CD4-positive, alpha-beta T cell (primary cell): ENCODE measurements at regions of chr10 and their contacts with region 1.

Region 1: GRCh38 chr10:110724116-110724921 is 80.2 kb downstream of the RBM20 start:
- DNase-seq: peak in 2 of 14 experiments; percentile 29 to 38
- ATAC-seq: peak; percentile 71
- H3K4me3 ChIP-seq: peak overlapping the region; percentile 11
- H3K4me3 Mint-ChIP-seq: peak overlapping the region; percentile 73
- H3K27ac ChIP-seq: peak overlapping the region; percentile 23 to 79
- H3K27ac Mint-ChIP-seq: peak overlapping the region; percentile 79
- H3K4me1 ChIP-seq: peaks cover 32% of the 10 kb centered on the region
- H3K4me1 Mint-ChIP-seq: peaks cover 53% of the 10 kb centered on the region
- H3K27me3 ChIP-seq: no peaks in the 10 kb centered on the region
- H3K27me3 Mint-ChIP-seq: no peaks in the 10 kb centered on the region
- CTCF ChIP-seq: no peak

Region 2: GRCh38 chr10:110395725-110396651 is 328.3 kb before region 1 on chr10:
- CTCF ChIA-PET with region 1: no interaction called
- POLR2A ChIA-PET with region 1: no interaction called
- intact Hi-C with region 1: no loop called
- DNase-seq: peak in 3 of 14 experiments; percentile 29 to 70 (median 63)
- ATAC-seq: peak; percentile 44
- H3K4me3 ChIP-seq: no peak overlapping the region
- H3K4me3 Mint-ChIP-seq: no peak overlapping the region
- H3K27ac ChIP-seq: no peak overlapping the region
- H3K27ac Mint-ChIP-seq: no peak overlapping the region
- H3K4me1 ChIP-seq: peaks cover 10% of the 10 kb centered on the region
- H3K4me1 Mint-ChIP-seq: no peaks in the 10 kb centered on the region
- H3K27me3 ChIP-seq: no peaks in the 10 kb centered on the region
- H3K27me3 Mint-ChIP-seq: no peaks in the 10 kb centered on the region
- CTCF ChIP-seq: no peak

Region 3: DNA sequence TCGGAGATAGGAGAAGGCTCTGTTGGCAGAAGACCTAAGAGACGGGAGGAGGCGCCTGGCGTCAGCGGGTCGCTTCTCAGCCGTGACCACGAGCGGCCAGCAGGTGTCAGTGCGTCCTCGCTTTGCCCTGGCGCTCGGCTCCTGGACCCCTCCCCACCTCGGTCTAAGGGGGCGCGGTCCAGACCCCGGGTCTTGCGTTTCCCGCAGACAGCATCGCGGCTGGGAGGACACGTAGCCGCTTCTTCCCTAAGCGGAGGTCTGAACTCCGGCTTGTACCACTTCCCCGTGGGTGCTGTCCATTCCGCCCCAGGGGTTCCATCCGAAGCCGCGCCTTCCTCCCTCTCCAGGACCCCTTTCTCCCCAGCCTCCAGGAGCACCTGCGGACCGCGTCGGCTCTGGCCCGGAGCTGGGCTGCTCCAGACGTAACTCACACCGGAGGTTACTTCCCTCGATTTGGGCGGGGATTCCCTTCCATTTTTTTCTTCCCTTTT is 351.9 kb after region 1 on chr10:
- CTCF ChIA-PET with region 1: no interaction called
- POLR2A ChIA-PET with region 1: no interaction called
- intact Hi-C with region 1: loop called in 1 of 2 experiments (anchors 10 kb)
- DNase-seq: peak in 12 of 14 experiments; percentile 21 to 60 (median 36)
- ATAC-seq: peak; percentile 65
- H3K4me3 ChIP-seq: peak overlapping the region; percentile 47
- H3K4me3 Mint-ChIP-seq: peak overlapping the region; percentile 51
- H3K27ac ChIP-seq: no peak overlapping the region
- H3K27ac Mint-ChIP-seq: no peak overlapping the region
- H3K4me1 ChIP-seq: peaks cover 28% of the 10 kb centered on the region
- H3K4me1 Mint-ChIP-seq: peaks cover 24% of the 10 kb centered on the region
- H3K27me3 ChIP-seq: peaks cover 48 to 58% of the 10 kb centered on the region in 2 experiments
- H3K27me3 Mint-ChIP-seq: peaks cover 80% of the 10 kb centered on the region
- CTCF ChIP-seq: peak; percentile 45

Region 4: GRCh38 chr10:111316722-111317212 is 592.4 kb after region 1 on chr10:
- CTCF ChIA-PET with region 1: no interaction called
- POLR2A ChIA-PET with region 1: no interaction called
- intact Hi-C with region 1: no loop called
- DNase-seq: no peak
- ATAC-seq: no peak
- H3K4me3 ChIP-seq: no peak overlapping the region
- H3K4me3 Mint-ChIP-seq: no peak overlapping the region
- H3K27ac ChIP-seq: no peak overlapping the region
- H3K27ac Mint-ChIP-seq: no peak overlapping the region
- H3K4me1 ChIP-seq: no peaks in the 10 kb centered on the region
- H3K4me1 Mint-ChIP-seq: no peaks in the 10 kb centered on the region
- H3K27me3 ChIP-seq: peaks cover 2 to 15% of the 10 kb centered on the region in 2 experiments
- H3K27me3 Mint-ChIP-seq: peaks cover 43% of the 10 kb centered on the region
- CTCF ChIP-seq: no peak